ENCODE measurements at regions of chr12 and their contacts with region 1.

Region 1: DNA sequence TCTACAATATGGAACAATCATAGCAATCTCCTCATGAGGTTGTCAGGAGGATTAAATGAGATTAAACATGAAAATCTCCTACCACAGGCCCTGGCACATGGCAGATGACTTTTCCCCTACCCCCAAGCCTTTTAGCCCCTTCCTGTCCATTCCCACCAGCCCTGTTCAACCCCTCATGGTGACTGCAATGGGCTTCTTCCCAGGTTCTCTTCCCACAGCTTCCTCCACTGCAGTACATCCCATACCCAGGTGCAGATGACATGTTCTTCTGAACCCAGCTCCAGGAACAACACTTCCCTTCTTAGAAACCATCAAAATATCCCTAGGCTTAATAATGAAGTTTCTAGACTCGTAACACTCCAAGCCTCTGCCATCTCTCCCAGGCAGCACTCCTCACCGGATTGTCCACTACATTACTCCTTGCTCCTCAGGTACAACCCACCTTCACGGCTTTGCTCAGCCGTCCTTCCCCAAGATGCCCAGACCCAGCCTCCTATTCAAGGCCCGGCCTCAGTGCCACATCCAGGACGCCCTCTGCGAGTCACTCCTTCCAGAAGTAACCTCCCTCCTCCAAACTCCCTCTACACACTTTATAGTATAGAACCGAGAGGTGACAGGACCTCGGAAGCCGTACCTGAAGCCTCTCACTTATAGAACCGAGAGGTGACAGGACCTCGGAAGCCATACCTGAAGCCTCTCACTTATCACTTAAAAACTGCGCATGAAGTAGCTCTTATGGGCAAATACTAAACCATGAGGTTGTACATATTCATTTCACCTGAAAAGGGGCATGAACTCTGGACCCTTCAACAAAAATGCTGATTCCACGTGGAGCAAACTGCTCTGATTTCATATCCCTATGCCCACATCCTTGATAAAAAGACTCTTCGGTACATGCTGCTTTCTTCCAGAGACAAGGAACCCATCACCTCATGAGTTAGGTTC is 1.5 kb downstream of the CRACR2A start:
- DNase-seq: no peak
- H3K27ac ChIP-seq: no peak overlapping the region
- CTCF ChIP-seq: no peak

Region 2: DNA sequence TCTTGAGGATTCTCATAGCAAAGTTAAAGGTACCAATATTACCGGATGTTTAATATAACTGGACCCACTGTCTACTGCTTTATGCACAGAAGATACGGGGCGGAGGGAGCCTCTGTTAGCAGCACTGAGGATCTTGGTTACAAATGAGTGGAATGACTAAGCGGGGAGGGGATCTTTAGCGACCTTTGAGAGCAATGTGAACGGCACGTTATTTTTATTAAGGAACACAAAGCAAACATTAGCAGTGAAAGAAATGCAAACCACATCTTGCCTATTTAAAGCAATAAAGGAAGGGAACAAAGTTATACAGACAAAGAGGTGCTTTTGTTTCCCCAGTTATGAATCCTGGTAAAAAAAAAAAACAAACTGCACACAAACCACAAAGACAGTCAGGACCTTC is 287.5 kb before region 1 on chr12:
- CTCF ChIA-PET with region 1: no interaction called
- POLR2A ChIA-PET with region 1: interaction called, 10 read pairs
- DNase-seq: no peak
- H3K27ac ChIP-seq: no peak overlapping the region
- CTCF ChIP-seq: no peak

Region 3: DNA sequence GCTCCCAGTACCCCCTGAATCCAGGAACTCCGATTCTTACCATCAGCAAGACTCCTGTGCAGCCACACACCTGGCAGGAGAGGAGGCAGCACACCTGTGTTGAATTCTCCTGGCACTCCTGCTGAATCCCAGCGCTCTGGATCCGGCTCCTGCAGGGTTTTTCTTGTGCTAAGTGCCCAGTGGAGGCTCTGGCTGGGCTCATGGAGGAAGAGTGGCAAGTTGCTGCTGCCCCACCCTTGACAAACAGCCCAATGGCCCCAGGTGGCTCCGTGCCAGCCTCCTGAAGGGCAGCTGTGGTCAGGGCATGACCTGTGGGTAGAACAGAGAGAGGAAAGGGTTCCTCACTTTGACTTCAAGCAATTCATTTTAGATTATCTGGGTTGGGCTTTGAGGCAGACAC is 18.5 kb before region 1 on chr12:
- CTCF ChIA-PET with region 1: no interaction called
- POLR2A ChIA-PET with region 1: no interaction called
- DNase-seq: no peak
- H3K27ac ChIP-seq: no peak overlapping the region
- CTCF ChIP-seq: no peak